ENCODE measurements at regions of chr4 and their contacts with region 1.

Region 1: DNA sequence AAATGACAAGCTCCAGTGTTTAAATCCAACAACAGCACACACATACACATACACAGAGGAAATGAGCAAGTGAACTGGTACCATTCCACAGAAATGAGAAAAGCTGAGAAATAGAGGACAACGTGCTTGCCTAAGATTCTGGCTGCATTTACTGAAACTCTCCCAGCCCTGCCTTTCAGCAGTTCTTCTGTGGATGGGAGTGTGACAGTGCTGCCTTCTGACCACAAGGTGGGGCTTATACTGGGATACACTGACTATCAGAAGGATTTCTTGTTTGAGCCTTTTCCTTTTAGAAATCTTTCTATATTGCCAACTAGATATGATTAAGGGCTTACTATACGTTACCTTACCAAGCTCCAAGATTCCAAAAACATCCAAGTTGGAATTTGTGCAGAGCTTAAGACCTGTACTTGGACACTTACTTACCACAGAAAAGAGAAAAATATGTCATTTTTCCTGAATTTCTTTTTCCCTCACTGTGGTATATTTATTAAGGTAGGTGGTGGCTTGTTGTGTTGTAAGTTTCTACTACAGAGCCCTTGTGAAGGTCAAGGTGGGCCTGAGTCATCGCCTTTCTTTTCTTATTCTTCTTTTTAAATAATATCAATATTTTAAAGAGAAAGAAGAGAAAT is 10.7 kb upstream of the CXCL8 start:
- DNase-seq: no peak
- H3K4me3 ChIP-seq: no peak overlapping the region
- H3K27ac ChIP-seq: no peak overlapping the region
- H3K4me1 ChIP-seq: peaks cover 0 to 2% (median 0%) of the 10 kb centered on the region in 4 experiments; a peak in 1 of 7 replicates
- H3K27me3 ChIP-seq: no peaks in the 10 kb centered on the region
- CTCF ChIP-seq: peak; percentile 62 to 86 (median 75)
- EP300 ChIP-seq: no peak
- POLR2A ChIP-seq: no peak
- RAD21 ChIP-seq: peak; percentile 65 to 80

Region 2: DNA sequence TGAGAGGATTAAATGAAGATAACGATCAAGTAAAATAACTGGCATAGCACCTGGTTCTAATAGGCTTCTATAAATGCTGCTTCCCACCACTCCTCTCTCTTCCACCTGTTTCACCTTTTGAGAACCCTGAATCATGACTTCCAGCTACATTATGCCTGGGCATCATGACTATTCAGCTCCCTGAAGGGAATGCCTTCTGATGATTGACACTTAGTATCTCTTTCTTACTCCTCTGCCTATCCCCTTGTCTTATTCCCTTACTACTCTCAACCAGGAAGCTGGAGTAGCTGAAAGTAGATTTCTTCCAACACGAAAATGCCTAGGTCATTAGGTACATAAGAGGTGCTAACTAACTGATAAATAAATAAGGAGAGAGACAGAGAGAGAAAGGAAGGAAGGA is 14.0 kb before region 1 on chr4:
- CTCF ChIA-PET with region 1: interaction called, 15 read pairs
- POLR2A ChIA-PET with region 1: no interaction called
- DNase-seq: no peak
- H3K4me3 ChIP-seq: no peak overlapping the region
- H3K27ac ChIP-seq: no peak overlapping the region
- H3K4me1 ChIP-seq: no peaks in the 10 kb centered on the region
- H3K27me3 ChIP-seq: no peaks in the 10 kb centered on the region; a peak in 1 of 7 replicates
- CTCF ChIP-seq: no peak
- EP300 ChIP-seq: no peak
- POLR2A ChIP-seq: no peak
- RAD21 ChIP-seq: no peak

Region 3: GRCh38 chr4:73740353-73740778 is 10.7 kb after region 1 on chr4 and contains the start of gene CXCL8:
- CTCF ChIA-PET with region 1: interaction called, 16 read pairs
- POLR2A ChIA-PET with region 1: no interaction called
- DNase-seq: no peak
- H3K4me3 ChIP-seq: no peak within 1 kb of the TSS
- H3K27ac ChIP-seq: no peak within 1 kb of the TSS
- H3K4me1 ChIP-seq: no peaks in the 10 kb centered on the region
- H3K27me3 ChIP-seq: no peaks in the 10 kb centered on the region
- CTCF ChIP-seq: no peak
- EP300 ChIP-seq: no peak
- POLR2A ChIP-seq: no peak
- RAD21 ChIP-seq: no peak
- total RNA-seq, gene CXCL8: not detected in 2 replicates

Region 4: GRCh38 chr4:73897380-73898136 is 167.9 kb after region 1 on chr4:
- CTCF ChIA-PET with region 1: no interaction called
- POLR2A ChIA-PET with region 1: no interaction called
- DNase-seq: no peak
- H3K4me3 ChIP-seq: no peak overlapping the region
- H3K27ac ChIP-seq: no peak overlapping the region
- H3K4me1 ChIP-seq: no peaks in the 10 kb centered on the region
- H3K27me3 ChIP-seq: no peaks in the 10 kb centered on the region; a peak in 1 of 7 replicates
- CTCF ChIP-seq: no peak
- EP300 ChIP-seq: no peak
- POLR2A ChIP-seq: no peak
- RAD21 ChIP-seq: no peak